ENCODE measurements at regions of chrX and their contacts with region 1.

Region 1: DNA sequence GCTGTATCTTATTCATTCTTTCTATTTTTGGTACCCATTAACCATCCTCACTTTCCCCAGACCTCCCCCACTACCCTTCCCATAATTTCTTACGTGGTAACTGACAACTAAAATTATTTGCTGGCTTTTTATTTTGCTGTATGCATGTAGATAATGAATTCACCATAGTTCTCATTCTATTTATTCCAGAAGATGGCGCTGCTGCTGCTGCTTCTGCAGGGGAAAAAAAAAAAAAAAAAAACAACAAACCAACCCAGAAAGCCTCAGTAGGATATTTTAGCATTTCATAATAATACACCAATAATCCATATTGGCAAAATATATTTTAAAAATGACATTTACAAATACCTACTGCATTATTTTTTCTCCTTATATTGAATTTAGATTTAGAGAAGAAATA is 416.6 kb upstream of the MAGEB18 start:
- DNase-seq: peak; percentile 27
- H3K4me3 Mint-ChIP-seq: no peak overlapping the region
- H3K27ac Mint-ChIP-seq: no peak overlapping the region
- H3K4me1 Mint-ChIP-seq: no peaks in the 10 kb centered on the region
- H3K27me3 Mint-ChIP-seq: no peaks in the 10 kb centered on the region
- CTCF ChIP-seq: peak; percentile 40

Region 2: GRCh38 chrX:24990535-24990934 is 731.0 kb before region 1 on chrX:
- CTCF ChIA-PET with region 1: no interaction called
- POLR2A ChIA-PET with region 1: no interaction called
- intact Hi-C with region 1: no loop called
- DNase-seq: no peak
- H3K4me3 Mint-ChIP-seq: no peak overlapping the region
- H3K27ac Mint-ChIP-seq: no peak overlapping the region
- H3K4me1 Mint-ChIP-seq: no peaks in the 10 kb centered on the region
- H3K27me3 Mint-ChIP-seq: peaks cover 18% of the 10 kb centered on the region
- CTCF ChIP-seq: no peak

Region 3: DNA sequence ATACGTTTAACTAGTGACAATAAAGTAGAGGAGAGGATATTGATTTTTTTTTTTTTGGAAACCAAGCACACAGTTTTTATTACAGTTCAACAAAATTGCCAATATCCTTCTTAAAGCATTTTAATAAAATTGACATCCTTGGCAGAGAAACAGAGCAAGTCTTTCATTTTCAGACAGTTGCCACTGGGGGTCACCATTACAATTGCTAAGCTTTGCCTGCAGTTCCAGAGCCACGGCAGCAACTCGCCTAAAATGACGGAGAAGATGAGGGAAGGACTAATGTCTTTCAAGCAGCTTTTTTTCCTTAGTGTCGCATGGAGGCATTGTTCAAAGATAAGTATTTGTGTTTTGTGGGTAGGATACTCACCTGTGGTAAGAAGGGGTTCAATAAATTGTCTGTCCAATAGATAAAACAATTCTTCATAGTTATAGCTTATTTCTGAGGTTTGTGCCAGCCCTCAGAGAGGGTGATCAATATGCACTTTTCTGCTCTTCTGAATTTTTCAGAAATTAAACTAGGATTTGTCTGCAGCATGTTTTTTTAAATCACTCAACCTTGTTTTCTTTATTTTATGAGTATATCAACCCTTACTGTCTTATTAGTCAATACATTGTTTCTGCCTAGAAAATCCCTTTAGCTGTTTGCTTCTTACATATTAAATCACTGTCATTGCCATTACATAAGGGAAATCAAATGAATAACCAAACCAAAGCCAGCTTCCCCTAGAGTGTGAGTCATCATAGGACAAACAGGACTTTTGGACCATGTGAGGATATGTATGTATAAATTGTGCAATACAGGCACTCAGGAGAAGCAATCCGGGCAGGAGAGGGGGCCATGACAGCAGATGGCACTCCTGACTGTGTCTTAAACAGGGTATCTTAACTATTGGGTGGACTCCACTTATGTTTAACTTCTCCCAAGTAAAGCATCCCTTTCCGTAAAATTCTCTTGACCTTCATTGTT is 197.7 kb before region 1 on chrX:
- CTCF ChIA-PET with region 1: no interaction called
- POLR2A ChIA-PET with region 1: no interaction called
- intact Hi-C with region 1: loop called (anchors 1 kb)
- DNase-seq: peak; percentile 68
- H3K4me3 Mint-ChIP-seq: peak overlapping the region; percentile 33
- H3K27ac Mint-ChIP-seq: no peak overlapping the region
- H3K4me1 Mint-ChIP-seq: peaks cover 13% of the 10 kb centered on the region
- H3K27me3 Mint-ChIP-seq: no peaks in the 10 kb centered on the region
- CTCF ChIP-seq: peak; percentile 29

Region 4: GRCh38 chrX:25968920-25969319 is 247.4 kb after region 1 on chrX:
- CTCF ChIA-PET with region 1: interaction called, 3 read pairs
- POLR2A ChIA-PET with region 1: no interaction called
- intact Hi-C with region 1: loop called (anchors 1 kb)
- DNase-seq: peak; percentile 35
- H3K4me3 Mint-ChIP-seq: no peak overlapping the region
- H3K27ac Mint-ChIP-seq: no peak overlapping the region
- H3K4me1 Mint-ChIP-seq: no peaks in the 10 kb centered on the region
- H3K27me3 Mint-ChIP-seq: no peaks in the 10 kb centered on the region
- CTCF ChIP-seq: peak; percentile 39

Region 5: GRCh38 chrX:26651755-26652154 is 930.2 kb after region 1 on chrX:
- CTCF ChIA-PET with region 1: no interaction called
- POLR2A ChIA-PET with region 1: no interaction called
- intact Hi-C with region 1: loop called (anchors 10 kb)
- DNase-seq: peak; percentile 42
- H3K4me3 Mint-ChIP-seq: no peak overlapping the region
- H3K27ac Mint-ChIP-seq: no peak overlapping the region
- H3K4me1 Mint-ChIP-seq: no peaks in the 10 kb centered on the region
- H3K27me3 Mint-ChIP-seq: no peaks in the 10 kb centered on the region
- CTCF ChIP-seq: peak; percentile 26